GM12878 (cell line): ENCODE measurements at regions of chr4 and their contacts with region 1.

Region 1: GRCh38 chr4:150960818-150961217 is 54.3 kb downstream of the LRBA start:
- DNase-seq: no peak
- ATAC-seq: peak; percentile 86
- H3K4me3 ChIP-seq: no peak overlapping the region
- H3K27ac ChIP-seq: no peak overlapping the region
- H3K4me1 ChIP-seq: peaks cover 3% of the 10 kb centered on the region
- H3K27me3 ChIP-seq: no peaks in the 10 kb centered on the region
- CTCF ChIP-seq: peak; percentile 34 to 47 (median 45); a peak in 5 of 6 replicates
- EP300 ChIP-seq: no peak
- POLR2A ChIP-seq: no peak
- RAD21 ChIP-seq: peak; percentile 46; the same call in 1 of the 2 replicates

Region 2: GRCh38 chr4:150943818-150944217 is 17.0 kb before region 1 on chr4:
- CTCF ChIA-PET with region 1: interaction called, 21 read pairs
- POLR2A ChIA-PET with region 1: no interaction called
- RAD21 ChIA-PET with region 1: interaction called, 8 read pairs
- SMC1A ChIA-PET with region 1: interaction called, 30 read pairs
- in situ Hi-C with region 1: no loop called
- intact Hi-C with region 1: no loop called
- DNase-seq: no peak
- ATAC-seq: peak; percentile 68
- H3K4me3 ChIP-seq: no peak overlapping the region
- H3K27ac ChIP-seq: no peak overlapping the region
- H3K4me1 ChIP-seq: 0 out of 2 replicates have a peak, but pooled peaks cover 4% of the 10 kb centered on the region
- H3K27me3 ChIP-seq: no peaks in the 10 kb centered on the region
- CTCF ChIP-seq: no peak
- EP300 ChIP-seq: no peak
- POLR2A ChIP-seq: no peak
- RAD21 ChIP-seq: no peak

Region 3: DNA sequence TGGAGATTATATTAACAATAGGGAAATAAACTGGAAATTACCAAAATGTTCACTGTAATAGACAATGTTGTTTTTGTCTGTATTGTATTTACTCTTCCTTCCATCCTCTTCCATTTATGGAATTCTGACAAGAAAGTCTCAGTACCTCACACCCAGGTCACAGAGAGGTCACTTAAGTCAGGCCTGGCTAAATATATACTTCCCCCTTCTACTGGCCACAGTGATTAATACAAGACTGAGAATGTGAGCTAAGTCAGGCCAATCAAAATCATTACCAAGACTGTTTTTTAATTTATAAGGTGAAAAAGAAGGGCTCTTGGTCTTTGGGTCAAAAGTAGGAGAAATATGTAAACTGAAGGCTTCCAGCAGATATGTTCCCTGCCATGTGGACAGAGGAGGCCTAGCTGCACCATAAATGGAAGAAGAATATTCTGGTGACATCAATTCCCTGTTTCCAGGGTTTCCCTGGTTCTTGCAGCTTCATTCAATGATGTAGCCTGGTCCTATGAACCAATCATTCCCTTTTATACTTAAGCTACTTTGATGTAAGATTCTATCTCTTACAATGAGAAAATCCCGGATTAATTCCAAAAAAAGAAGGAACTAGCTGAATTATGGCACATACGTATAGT is 10.0 kb before region 1 on chr4:
- CTCF ChIA-PET with region 1: interaction called, 33 read pairs
- POLR2A ChIA-PET with region 1: interaction called, 8 read pairs
- RAD21 ChIA-PET with region 1: interaction called, 8 read pairs
- SMC1A ChIA-PET with region 1: interaction called, 30 read pairs
- in situ Hi-C with region 1: no loop called
- intact Hi-C with region 1: loop called (anchors 1 kb)
- DNase-seq: no peak
- ATAC-seq: peak; percentile 91
- H3K4me3 ChIP-seq: peak overlapping the region; percentile 11; the same call in 1 of the 2 replicates
- H3K27ac ChIP-seq: peak overlapping the region; percentile 30
- H3K4me1 ChIP-seq: peaks cover 15% of the 10 kb centered on the region
- H3K27me3 ChIP-seq: no peaks in the 10 kb centered on the region
- CTCF ChIP-seq: no peak
- EP300 ChIP-seq: no peak
- POLR2A ChIP-seq: no peak
- RAD21 ChIP-seq: no peak

Region 4: DNA sequence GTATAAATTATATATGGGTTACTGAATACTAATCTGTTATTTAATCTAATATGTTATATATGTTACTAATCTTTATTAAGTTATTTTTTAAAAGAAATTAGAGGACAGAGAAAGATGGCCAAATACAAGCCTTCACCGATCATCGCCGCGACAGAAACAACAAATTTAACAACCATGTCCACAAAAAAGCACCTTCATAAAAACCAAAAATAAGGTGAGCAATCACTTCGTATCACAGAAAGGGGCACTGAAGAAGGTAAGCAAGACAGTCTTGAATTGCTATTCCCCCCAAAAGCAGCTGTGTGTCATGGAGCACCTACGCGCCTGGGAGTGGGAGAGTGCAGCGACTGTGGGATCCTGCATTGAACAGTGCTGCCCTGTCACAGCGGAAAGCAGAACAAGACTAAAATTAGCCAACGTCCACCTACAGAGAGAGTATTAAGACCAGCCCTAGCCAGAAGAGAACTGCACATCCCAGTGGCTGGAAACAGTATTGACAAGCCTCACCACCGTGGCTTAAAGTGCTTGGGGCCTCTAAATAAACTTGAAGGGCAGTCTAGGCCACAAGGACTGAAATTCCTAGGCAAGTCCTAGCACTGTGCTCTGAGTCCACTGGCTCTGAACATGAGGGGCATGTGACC is 15.8 kb after region 1 on chr4:
- CTCF ChIA-PET with region 1: interaction called, 48 read pairs
- POLR2A ChIA-PET with region 1: interaction called, 11 read pairs
- RAD21 ChIA-PET with region 1: interaction called, 22 read pairs
- SMC1A ChIA-PET with region 1: interaction called, 61 read pairs
- in situ Hi-C with region 1: no loop called
- intact Hi-C with region 1: no loop called
- DNase-seq: no peak
- ATAC-seq: peak; percentile 84
- H3K4me3 ChIP-seq: no peak overlapping the region
- H3K27ac ChIP-seq: no peak overlapping the region
- H3K4me1 ChIP-seq: peaks cover 22% of the 10 kb centered on the region
- H3K27me3 ChIP-seq: no peaks in the 10 kb centered on the region
- CTCF ChIP-seq: 0 out of 6 replicates have a peak, but pooled peaks of 2 of the 3 experiments have one; percentile 10 to 12
- EP300 ChIP-seq: no peak
- POLR2A ChIP-seq: no peak
- RAD21 ChIP-seq: peak; percentile 28; the same call in 1 of the 2 replicates

Region 5: DNA sequence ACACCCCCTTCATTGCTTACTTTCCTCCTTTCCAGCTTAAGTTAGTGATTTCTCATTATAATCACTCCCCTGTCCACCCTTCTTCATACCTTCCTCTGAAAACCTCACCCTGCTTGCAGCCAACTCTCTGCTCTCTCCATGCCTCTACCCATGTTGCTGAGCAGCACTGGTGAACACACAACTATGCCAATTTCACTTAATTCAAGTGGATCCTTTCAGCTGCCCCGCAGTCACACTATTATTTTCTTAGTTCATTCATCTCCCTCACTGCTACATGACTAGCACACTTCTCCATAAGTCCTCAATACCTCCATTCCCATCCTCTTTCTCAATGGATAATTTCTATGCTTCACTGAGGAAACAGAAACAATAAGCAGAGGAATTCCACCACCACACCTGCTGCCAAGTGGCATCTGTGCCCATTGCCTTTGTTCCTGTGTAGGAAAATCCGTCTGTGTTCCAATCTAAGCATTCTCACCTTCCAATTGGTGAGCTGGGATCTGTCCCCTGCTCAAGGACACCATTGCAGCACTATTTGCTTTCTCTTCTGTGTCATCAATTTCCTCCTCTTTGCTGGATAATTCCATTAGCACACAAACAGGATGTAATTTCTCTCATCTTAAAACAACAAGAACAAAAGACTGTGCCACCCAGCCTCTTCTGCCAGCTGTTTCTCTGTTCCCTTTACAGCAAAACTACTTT is 290.9 kb after region 1 on chr4:
- CTCF ChIA-PET with region 1: no interaction called
- POLR2A ChIA-PET with region 1: no interaction called
- RAD21 ChIA-PET with region 1: no interaction called
- SMC1A ChIA-PET with region 1: no interaction called
- in situ Hi-C with region 1: no loop called
- intact Hi-C with region 1: no loop called
- DNase-seq: no peak
- ATAC-seq: no peak
- H3K4me3 ChIP-seq: no peak overlapping the region
- H3K27ac ChIP-seq: no peak overlapping the region
- H3K4me1 ChIP-seq: no peaks in the 10 kb centered on the region
- H3K27me3 ChIP-seq: no peaks in the 10 kb centered on the region
- CTCF ChIP-seq: no peak
- EP300 ChIP-seq: no peak
- POLR2A ChIP-seq: no peak
- RAD21 ChIP-seq: no peak

Region 6: DNA sequence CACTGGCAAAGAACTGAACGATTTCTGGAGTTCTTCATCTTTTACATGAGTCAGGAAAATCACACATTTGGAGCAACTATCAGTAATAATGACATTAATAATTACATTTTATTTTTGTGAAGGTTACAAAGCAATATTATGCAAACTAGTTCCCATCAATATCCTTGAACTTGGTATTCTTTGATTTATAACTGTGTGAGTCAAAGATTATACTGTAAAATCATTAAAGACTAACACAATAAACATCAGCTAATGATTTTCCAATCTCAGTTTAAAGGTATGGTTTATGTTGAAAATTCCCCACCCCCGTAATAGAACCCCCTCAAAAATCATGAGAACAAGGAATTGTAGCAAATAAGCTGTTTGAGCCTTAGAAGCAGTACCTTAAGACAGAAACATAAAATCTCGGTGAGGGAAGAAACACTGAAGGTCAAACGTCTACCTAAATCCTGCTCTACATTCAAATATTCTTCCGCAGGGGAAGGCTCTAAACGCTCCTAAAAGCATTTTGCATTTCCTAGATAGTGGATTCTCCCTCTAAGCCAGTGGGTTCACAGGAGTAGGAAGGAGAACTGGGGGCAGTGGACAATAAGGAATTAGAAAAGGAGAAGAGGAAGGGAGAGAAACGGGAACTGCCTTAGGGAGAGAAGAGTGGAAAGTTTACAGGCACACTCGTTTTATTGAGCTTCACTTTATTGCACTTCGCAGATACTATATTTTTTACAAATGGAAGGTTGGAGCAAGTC is 386.8 kb after region 1 on chr4:
- CTCF ChIA-PET with region 1: no interaction called
- POLR2A ChIA-PET with region 1: no interaction called
- RAD21 ChIA-PET with region 1: no interaction called
- SMC1A ChIA-PET with region 1: no interaction called
- in situ Hi-C with region 1: no loop called
- intact Hi-C with region 1: no loop called
- DNase-seq: no peak
- ATAC-seq: no peak
- H3K4me3 ChIP-seq: no peak overlapping the region
- H3K27ac ChIP-seq: no peak overlapping the region
- H3K4me1 ChIP-seq: no peaks in the 10 kb centered on the region
- H3K27me3 ChIP-seq: no peaks in the 10 kb centered on the region; a peak in 2 of 4 replicates
- CTCF ChIP-seq: no peak
- EP300 ChIP-seq: no peak
- POLR2A ChIP-seq: no peak
- RAD21 ChIP-seq: no peak